ENCODE measurements at regions of chr4 and their contacts with region 1.

Region 1: GRCh38 chr4:48122756-48123155 is 11.3 kb downstream of the TXK start:
- DNase-seq: no peak
- ATAC-seq: no peak
- H3K4me3 ChIP-seq: no peak overlapping the region
- H3K4me3 Mint-ChIP-seq: no peak overlapping the region
- H3K27ac ChIP-seq: no peak overlapping the region
- H3K27ac Mint-ChIP-seq: peak overlapping the region in 1 of 9 donors; percentile 97
- H3K4me1 ChIP-seq: peaks cover 22 to 90% of the 10 kb centered on the region in 2 donors
- H3K4me1 Mint-ChIP-seq: peaks cover 24 to 72% (median 68%) of the 10 kb centered on the region in 7 donors
- H3K27me3 ChIP-seq: no peaks in the 10 kb centered on the region
- H3K27me3 Mint-ChIP-seq: no peaks in the 10 kb centered on the region

Region 2: DNA sequence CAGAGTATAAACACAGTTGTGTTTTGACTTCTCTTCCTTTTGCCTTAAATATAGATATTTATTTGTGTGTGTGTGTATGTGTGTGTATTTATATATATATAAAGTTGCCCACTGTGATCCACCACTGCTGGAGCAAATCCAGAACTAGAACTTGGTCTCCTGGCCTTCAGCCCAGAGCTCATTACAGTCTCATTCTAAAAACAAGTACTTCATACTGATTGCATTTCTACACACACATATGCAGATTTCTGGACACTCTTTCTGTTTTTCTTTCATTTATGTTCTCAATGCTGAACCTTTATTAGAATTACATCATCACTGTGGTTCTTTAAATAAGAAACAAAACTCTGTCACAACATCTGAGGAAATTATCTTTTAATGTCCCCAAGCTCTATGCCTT is 10.9 kb after region 1 on chr4:
- CTCF ChIA-PET with region 1: interaction called, 127 read pairs
- POLR2A ChIA-PET with region 1: interaction called, 184 read pairs
- intact Hi-C with region 1: no loop called
- DNase-seq: no peak
- ATAC-seq: no peak
- H3K4me3 ChIP-seq: peak overlapping the region; percentile 61
- H3K4me3 Mint-ChIP-seq: peak overlapping the region in 9 of 10 donors; percentile 91 to 99 (median 94)
- H3K27ac ChIP-seq: peak overlapping the region; percentile 79
- H3K27ac Mint-ChIP-seq: peak overlapping the region in 7 of 9 donors; percentile 82 to 97 (median 93)
- H3K4me1 ChIP-seq: peaks cover 65 to 68% of the 10 kb centered on the region in 2 donors
- H3K4me1 Mint-ChIP-seq: peaks cover 47 to 83% (median 75%) of the 10 kb centered on the region in 7 donors
- H3K27me3 ChIP-seq: no peaks in the 10 kb centered on the region
- H3K27me3 Mint-ChIP-seq: no peaks in the 10 kb centered on the region

Region 3: DNA sequence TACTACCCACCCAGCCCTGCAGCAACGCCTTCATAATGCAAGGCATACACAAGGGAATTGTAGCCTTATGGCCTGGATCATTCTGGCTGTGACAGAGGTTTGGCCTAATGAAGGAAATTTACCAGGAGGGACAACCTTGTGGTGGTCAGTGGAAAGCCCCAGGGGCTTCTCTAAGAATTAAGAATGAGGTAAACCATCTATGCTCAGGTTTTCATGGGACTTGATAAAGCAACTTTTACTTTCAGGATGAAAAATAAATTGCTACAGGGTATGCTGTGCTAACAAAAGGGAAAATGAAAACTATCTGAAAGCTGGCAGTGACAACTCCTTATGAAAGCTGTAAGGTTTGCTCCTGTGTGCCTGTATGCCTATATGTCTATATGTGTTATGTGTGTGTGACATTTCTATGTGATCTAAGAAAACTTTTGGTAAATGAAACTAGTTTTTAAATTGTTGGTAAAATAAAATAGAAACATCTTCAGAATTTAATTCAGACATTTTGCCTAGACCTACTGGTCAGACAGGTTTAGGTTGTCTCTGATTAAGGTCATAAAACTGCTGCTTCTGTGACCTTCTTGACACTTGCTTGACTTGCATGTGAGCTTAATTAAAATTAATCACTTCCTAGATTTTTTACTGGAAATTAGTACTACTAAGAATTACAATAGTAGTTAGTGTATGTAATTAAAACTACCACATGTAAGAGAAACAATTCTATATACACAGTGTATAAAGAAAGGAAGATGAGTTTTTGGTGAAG is 31.2 kb after region 1 on chr4:
- CTCF ChIA-PET with region 1: no interaction called
- POLR2A ChIA-PET with region 1: no interaction called
- intact Hi-C with region 1: no loop called
- DNase-seq: no peak
- ATAC-seq: no peak
- H3K4me3 ChIP-seq: no peak overlapping the region
- H3K4me3 Mint-ChIP-seq: no peak overlapping the region
- H3K27ac ChIP-seq: no peak overlapping the region
- H3K27ac Mint-ChIP-seq: no peak overlapping the region
- H3K4me1 ChIP-seq: no peaks in the 10 kb centered on the region
- H3K4me1 Mint-ChIP-seq: peaks cover 0 to 1% (median 0%) of the 10 kb centered on the region in 7 donors
- H3K27me3 ChIP-seq: no peaks in the 10 kb centered on the region
- H3K27me3 Mint-ChIP-seq: no peaks in the 10 kb centered on the region

Measured in naive thymus-derived CD4-positive, alpha-beta T cell (primary cell).